ENCODE measurements at regions of chr1 and their contacts with region 1.

Region 1: DNA sequence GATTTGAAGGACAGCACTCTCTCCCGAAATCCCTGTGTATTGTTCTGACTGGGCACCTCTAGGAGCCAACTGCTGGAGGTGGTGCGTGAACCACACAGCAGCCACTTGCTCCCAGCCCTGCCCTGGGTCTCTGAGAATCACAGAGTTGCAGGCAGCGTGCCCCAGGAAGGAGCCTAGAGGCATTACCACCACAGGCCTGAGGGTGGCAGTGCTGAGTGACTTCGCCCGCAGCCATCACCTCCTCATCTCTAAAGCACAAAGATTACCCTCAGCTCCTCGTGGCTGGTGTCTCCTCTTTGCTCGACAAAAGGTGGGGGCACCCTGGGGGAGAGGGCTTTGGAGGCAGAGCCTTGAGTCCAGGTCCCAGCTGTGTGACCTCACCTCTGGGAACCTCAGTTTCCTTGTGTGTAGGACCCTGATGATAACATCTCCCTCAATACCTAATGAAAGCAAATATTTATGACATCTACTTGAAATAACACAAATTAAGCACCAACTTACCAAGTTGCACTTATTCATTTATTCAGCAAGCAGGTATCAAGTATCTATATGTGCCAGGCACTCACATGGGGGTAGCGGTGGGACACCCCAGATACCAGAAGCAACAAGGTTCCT is 86.3 kb downstream of the VWA5B1 start:
- DNase-seq: no peak
- ATAC-seq: peak; percentile 78
- H3K4me3 ChIP-seq: no peak overlapping the region
- H3K27ac ChIP-seq: no peak overlapping the region
- H3K4me1 ChIP-seq: no peaks in the 10 kb centered on the region
- H3K27me3 ChIP-seq: peaks cover 0 to 43% of the 10 kb centered on the region in 2 donors
- CTCF ChIP-seq: peak; percentile 61 to 77

Region 2: GRCh38 chr1:20485527-20486456 is 108.8 kb after region 1 on chr1 and contains the start of gene CAMK2N1:
- intact Hi-C with region 1: loop called in 1 of 2 experiments (anchors 10 kb)
- DNase-seq: peak; percentile 40 to 84 (median 72)
- ATAC-seq: peak; percentile 75
- H3K4me3 ChIP-seq: peak within 1 kb of the TSS; percentile 35 to 40
- H3K27ac ChIP-seq: peak within 1 kb of the TSS; percentile 26 to 53
- H3K4me1 ChIP-seq: peaks cover 6 to 15% of the 10 kb centered on the region in 2 donors
- H3K27me3 ChIP-seq: peaks cover 36 to 96% of the 10 kb centered on the region in 2 donors
- CTCF ChIP-seq: no peak
- polyA plus RNA-seq, gene CAMK2N1: 53.9 to 91.0 (median 64.6) TPM

Measured in left lung (tissue), 14 donors.